Dendritic cell treated with granulocyte-macrophage colony-stimulating factor and Interleukin-4, amounts not matched to agents 40 ng/mL and 50 ng/mL, for 4 days (primary cell): ENCODE measurements at regions of chr6 and their contacts with region 1.

Region 1: DNA sequence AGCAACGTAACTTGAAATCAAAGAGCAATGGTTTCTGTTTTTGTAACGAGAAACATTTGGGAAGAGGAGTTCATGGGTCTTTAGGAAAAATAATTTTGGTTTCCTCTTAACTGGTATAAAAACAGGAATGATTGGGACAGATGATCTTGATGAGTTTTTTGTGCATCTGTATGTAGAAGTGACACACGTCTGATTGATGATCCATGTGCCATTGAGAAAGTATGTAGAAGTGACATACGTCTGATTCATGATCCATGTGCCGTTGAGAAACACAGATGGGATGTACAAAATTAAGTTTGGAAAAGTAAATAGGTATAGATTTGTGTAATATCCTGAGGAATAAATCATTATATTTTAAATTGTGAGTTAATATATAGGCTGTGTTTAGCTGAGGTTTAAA is 2.1 kb downstream of the KIAA1586 start:
- H3K4me3 Mint-ChIP-seq: no peak overlapping the region
- H3K27ac Mint-ChIP-seq: no peak overlapping the region
- H3K4me1 Mint-ChIP-seq: peaks cover 18% of the 10 kb centered on the region
- H3K27me3 Mint-ChIP-seq: peaks cover 3% of the 10 kb centered on the region

Region 2: GRCh38 chr6:57089687-57090460 is 41.3 kb after region 1 on chr6 and contains the start of gene ZNF451:
- intact Hi-C with region 1: loop called (anchors 5 kb)
- H3K4me3 Mint-ChIP-seq: peak within 1 kb of the TSS; percentile 94
- H3K27ac Mint-ChIP-seq: peak within 1 kb of the TSS; percentile 93
- H3K4me1 Mint-ChIP-seq: peaks cover 38% of the 10 kb centered on the region
- H3K27me3 Mint-ChIP-seq: no peaks in the 10 kb centered on the region